Endothelial cell of umbilical vein (primary cell): ENCODE measurements at regions of chr6 and their contacts with region 1.

Region 1: GRCh38 chr6:144013486-144013909 is 5.4 kb upstream of the PLAGL1 start:
- DNase-seq: peak; percentile 77
- H3K4me3 ChIP-seq: no peak overlapping the region
- H3K27ac ChIP-seq: no peak overlapping the region
- H3K4me1 ChIP-seq: no peaks in the 10 kb centered on the region
- H3K27me3 ChIP-seq: peaks cover 11 to 16% of the 10 kb centered on the region in 2 experiments
- CTCF ChIP-seq: peak; percentile 80 to 83
- POLR2A ChIP-seq: no peak

Region 2: GRCh38 chr6:143450453-143451371 is 562.8 kb before region 1 on chr6 and contains the starts of genes ADAT2 and PEX3:
- CTCF ChIA-PET with region 1: interaction called, 10 read pairs
- POLR2A ChIA-PET with region 1: no interaction called
- dilution Hi-C with region 1: no loop called
- intact Hi-C with region 1: loop called (anchors 5 kb)
- DNase-seq: peak; percentile 94
- H3K4me3 ChIP-seq: peak within 1 kb of the TSS; percentile 52 to 90 (median 73)
- H3K27ac ChIP-seq: peak within 1 kb of the TSS; percentile 65
- H3K4me1 ChIP-seq: peaks cover 18% of the 10 kb centered on the region
- H3K27me3 ChIP-seq: no peaks in the 10 kb centered on the region
- CTCF ChIP-seq: no peak
- POLR2A ChIP-seq: peak; percentile 87
- total RNA-seq, gene ADAT2: 9.8 and 11.3 TPM in 2 replicates
- total RNA-seq, gene PEX3: 20.0 and 21.7 TPM in 2 replicates

Region 3: GRCh38 chr6:143695130-143695968 is 318.1 kb before region 1 on chr6:
- CTCF ChIA-PET with region 1: interaction called, 3 read pairs
- POLR2A ChIA-PET with region 1: no interaction called
- dilution Hi-C with region 1: no loop called
- intact Hi-C with region 1: loop called (anchors 2 kb)
- DNase-seq: peak; percentile 49
- H3K4me3 ChIP-seq: no peak overlapping the region
- H3K27ac ChIP-seq: peak overlapping the region; percentile 0
- H3K4me1 ChIP-seq: peaks cover 53% of the 10 kb centered on the region
- H3K27me3 ChIP-seq: no peaks in the 10 kb centered on the region
- CTCF ChIP-seq: no peak
- POLR2A ChIP-seq: no peak

Region 4: DNA sequence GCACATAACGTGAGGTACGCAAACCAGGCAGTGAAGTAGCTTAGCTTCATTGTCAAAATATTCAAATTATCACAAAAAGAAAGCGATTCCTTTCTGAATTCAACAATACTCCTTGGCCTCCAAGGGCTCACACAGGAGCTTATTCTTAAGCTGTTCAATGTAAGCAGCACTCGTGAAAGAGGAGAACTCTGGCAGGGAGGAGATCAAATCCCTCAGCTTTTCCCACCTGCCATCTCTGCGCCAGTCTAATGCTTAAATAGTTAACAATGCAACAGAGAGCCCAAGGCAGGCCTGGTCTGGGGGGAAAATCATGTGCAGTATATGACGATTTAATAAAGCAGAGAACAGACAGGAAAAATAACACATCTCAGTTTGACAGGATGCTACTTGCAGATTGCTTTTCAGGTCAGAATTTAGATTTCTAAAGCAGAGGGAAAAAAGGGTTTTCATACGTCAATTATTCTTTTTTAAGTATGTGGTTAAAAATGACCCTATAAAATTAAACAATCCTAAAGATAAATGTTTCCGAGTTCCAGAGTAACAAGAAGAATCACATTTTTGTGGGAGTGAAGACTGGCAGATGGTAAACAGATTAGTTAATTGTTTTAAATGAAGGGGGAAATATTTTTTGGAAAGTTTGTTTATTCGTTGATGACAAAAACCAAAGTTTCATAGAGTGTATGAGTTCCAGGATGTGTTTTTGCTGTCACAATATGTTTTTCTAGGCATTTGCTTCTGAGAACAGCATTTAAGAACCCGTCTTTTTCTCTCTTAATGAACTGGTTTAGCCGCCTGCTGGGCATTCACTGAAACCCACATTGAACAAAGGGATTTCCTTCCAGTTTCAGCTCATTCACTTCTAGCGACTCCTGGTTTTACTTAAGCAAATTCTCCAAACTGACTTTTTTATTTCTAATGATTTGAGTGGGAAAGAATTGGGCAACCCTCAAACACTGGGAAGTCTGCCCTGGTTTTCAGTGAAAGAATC is 51.3 kb before region 1 on chr6:
- CTCF ChIA-PET with region 1: interaction called, 3 read pairs
- POLR2A ChIA-PET with region 1: no interaction called
- dilution Hi-C with region 1: no loop called
- intact Hi-C with region 1: loop called (anchors 2 kb)
- DNase-seq: peak; percentile 49
- H3K4me3 ChIP-seq: no peak overlapping the region
- H3K27ac ChIP-seq: no peak overlapping the region
- H3K4me1 ChIP-seq: no peaks in the 10 kb centered on the region
- H3K27me3 ChIP-seq: peaks cover 4 to 26% of the 10 kb centered on the region in 2 experiments
- CTCF ChIP-seq: peak; percentile 26 to 44
- POLR2A ChIP-seq: no peak

Region 5: GRCh38 chr6:144053601-144054000 is 40.1 kb after region 1 on chr6:
- CTCF ChIA-PET with region 1: no interaction called
- POLR2A ChIA-PET with region 1: no interaction called
- dilution Hi-C with region 1: no loop called
- intact Hi-C with region 1: no loop called
- DNase-seq: no peak
- H3K4me3 ChIP-seq: no peak overlapping the region
- H3K27ac ChIP-seq: no peak overlapping the region
- H3K4me1 ChIP-seq: no peaks in the 10 kb centered on the region
- H3K27me3 ChIP-seq: peaks cover 8 to 22% of the 10 kb centered on the region in 2 experiments
- CTCF ChIP-seq: no peak
- POLR2A ChIP-seq: no peak